CD8-positive, alpha-beta T cell (primary cell): ENCODE measurements at regions of chr13 and their contacts with region 1.

Region 1: DNA sequence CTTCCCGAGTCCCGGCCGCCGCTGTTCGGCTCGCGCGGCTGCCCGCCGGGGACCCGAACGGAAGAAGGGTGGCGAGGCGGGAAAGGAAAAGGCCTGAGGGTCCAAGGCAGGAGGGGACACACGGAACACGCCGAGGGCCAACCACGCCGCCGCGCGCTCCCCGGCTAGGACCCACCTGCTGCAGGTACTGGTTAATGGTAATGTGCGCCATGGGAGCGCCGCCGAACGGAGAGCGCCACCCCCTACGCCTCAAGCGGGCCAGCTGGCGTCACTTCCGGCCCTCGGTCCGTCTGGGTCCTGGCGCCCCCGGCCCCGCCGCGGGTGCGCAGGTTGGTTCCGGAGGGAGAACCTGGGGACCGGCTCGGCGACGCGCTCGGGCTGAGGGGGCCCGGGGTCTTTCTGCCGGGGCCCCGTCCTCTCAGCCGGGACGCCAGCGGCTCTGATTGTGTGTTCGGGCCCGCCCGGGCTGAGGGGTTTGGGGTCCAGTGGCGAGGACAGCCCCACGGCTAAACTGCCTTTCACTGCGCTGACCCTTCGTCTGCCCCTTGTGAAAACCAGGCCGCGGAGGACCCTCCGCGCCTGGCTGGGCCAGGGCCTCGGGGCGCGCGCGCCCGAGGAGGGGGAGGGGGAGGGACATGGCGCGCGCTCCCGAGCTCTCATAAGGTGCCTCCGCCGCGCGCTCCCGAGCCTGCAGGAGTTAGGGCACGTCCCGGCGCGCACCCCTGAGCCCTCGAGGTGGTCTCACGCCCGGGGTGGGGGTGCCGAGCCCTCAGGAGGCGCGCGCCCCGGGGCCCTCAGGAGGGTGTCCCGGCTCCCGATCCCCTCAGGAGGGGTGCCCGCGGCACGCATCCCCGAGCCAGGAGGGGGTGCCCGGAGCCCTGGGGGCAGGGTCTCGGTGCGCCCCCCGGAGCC is at the start of gene PCID2:
- DNase-seq: peak; percentile 87 to 96 (median 91)
- ATAC-seq: peak; percentile 67
- H3K4me3 ChIP-seq: peak within 1 kb of the TSS; percentile 83 to 93
- H3K4me3 Mint-ChIP-seq: peak within 1 kb of the TSS; percentile 93
- H3K27ac ChIP-seq: peak within 1 kb of the TSS; percentile 90 to 95
- H3K27ac Mint-ChIP-seq: peak within 1 kb of the TSS; percentile 95
- H3K4me1 ChIP-seq: peaks cover 52% of the 10 kb centered on the region
- H3K4me1 Mint-ChIP-seq: peaks cover 58% of the 10 kb centered on the region
- H3K27me3 ChIP-seq: no peaks in the 10 kb centered on the region
- H3K27me3 Mint-ChIP-seq: no peaks in the 10 kb centered on the region
- CTCF ChIP-seq: no peak
- total RNA-seq, gene PCID2: 30.5 to 34.1 TPM

Region 2: GRCh38 chr13:112587212-112587763 is 621.4 kb before region 1 on chr13:
- CTCF ChIA-PET with region 1: no interaction called
- POLR2A ChIA-PET with region 1: no interaction called
- intact Hi-C with region 1: loop called in 1 of 2 experiments (anchors 5 kb)
- DNase-seq: peak; percentile 9 to 81 (median 68)
- ATAC-seq: peak; percentile 70
- H3K4me3 ChIP-seq: peak overlapping the region; percentile 76 to 83
- H3K4me3 Mint-ChIP-seq: peak overlapping the region; percentile 96
- H3K27ac ChIP-seq: peak overlapping the region; percentile 57 to 58
- H3K27ac Mint-ChIP-seq: peak overlapping the region; percentile 89
- H3K4me1 ChIP-seq: peaks cover 18% of the 10 kb centered on the region
- H3K4me1 Mint-ChIP-seq: peaks cover 44% of the 10 kb centered on the region
- H3K27me3 ChIP-seq: no peaks in the 10 kb centered on the region
- H3K27me3 Mint-ChIP-seq: no peaks in the 10 kb centered on the region
- CTCF ChIP-seq: no peak

Region 3: DNA sequence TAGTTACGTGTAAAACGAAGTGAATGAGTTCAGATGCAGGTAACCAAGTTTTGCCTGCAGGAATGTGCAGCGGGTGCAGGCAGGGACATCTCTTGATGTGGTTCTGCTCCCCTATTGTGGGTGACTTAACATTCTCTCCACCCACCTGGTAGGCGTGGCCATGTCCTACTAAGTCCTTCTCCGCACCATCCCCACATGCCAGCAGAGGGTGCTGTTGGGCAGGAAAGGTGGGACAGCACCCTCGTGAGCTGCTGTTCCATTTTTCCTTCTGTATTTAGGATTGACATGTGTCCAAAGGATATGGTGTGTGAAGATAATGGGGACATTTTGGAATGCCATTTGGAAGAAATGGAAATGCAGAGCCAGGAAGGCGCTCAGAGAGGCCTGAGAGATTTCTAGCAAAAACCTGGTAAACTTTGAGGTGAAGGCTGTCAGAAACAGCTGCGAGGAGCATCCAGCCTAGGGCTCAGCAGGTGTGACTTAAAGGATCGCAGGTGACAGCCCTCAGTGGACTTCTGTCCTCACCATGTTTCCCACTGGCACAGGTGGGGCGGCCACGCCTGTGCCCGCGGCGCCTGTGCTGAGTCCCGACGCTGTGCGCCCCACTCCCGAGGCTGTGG is 265.9 kb before region 1 on chr13:
- CTCF ChIA-PET with region 1: interaction called, 3 read pairs
- POLR2A ChIA-PET with region 1: no interaction called
- intact Hi-C with region 1: loop called (anchors 1 to 5 kb)
- DNase-seq: peak; percentile 89 to 98 (median 96)
- ATAC-seq: peak; percentile 99
- H3K4me3 ChIP-seq: peak overlapping the region; percentile 45 to 47
- H3K4me3 Mint-ChIP-seq: peak overlapping the region; percentile 89
- H3K27ac ChIP-seq: no peak overlapping the region
- H3K27ac Mint-ChIP-seq: no peak overlapping the region
- H3K4me1 ChIP-seq: peaks cover 9% of the 10 kb centered on the region
- H3K4me1 Mint-ChIP-seq: peaks cover 8% of the 10 kb centered on the region
- H3K27me3 ChIP-seq: peaks cover 0 to 12% of the 10 kb centered on the region in 2 experiments
- H3K27me3 Mint-ChIP-seq: peaks cover 24% of the 10 kb centered on the region
- CTCF ChIP-seq: peak; percentile 98

Region 4: DNA sequence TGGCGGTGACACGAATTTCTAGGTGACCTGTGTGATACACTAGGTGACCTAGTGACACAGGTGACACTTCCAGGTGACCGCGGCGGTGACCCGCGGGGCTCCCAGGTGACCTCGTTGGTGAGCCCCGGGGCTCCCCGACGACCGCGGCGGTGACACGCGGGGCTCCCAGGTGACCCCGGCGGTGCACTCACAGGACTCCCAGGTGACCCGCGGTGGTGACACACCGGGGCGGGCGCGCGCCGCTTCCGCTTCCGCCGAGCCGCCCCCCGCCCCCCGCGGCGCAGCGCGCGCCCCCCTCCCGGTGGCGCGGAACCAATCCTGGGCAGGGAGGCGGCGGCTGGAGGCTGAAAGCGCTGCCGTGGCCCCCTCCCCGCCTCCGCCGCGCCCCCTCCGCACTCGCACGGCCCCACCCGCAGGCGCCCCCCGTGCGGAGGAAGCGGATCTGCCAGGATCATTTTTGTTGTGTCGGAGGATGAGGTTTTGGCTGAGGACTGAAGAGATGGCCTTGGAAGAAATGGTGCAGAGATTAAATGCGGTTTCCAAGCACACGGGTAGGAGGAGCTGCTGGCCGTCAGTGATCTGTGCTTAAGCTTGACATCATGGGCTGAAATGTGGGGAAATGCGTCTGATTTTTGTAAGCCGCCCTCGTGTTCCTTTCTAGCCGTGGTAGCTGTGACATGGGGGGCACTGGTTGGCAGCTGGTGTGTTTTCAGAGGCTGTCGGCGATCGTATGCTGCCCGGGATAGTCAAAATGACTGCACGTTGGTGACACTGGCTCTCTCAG is 239.6 kb before region 1 on chr13 and contains the start of gene MCF2L:
- CTCF ChIA-PET with region 1: no interaction called
- POLR2A ChIA-PET with region 1: interaction called, 6 read pairs
- intact Hi-C with region 1: loop called in 1 of 2 experiments (anchors 2 kb)
- DNase-seq: peak; percentile 31 to 83 (median 69)
- ATAC-seq: peak; percentile 75
- H3K4me3 ChIP-seq: peak within 1 kb of the TSS; percentile 63 to 66
- H3K4me3 Mint-ChIP-seq: peak within 1 kb of the TSS; percentile 96
- H3K27ac ChIP-seq: peak within 1 kb of the TSS; percentile 53 to 69
- H3K27ac Mint-ChIP-seq: peak within 1 kb of the TSS; percentile 95
- H3K4me1 ChIP-seq: peaks cover 23% of the 10 kb centered on the region
- H3K4me1 Mint-ChIP-seq: peaks cover 41% of the 10 kb centered on the region
- H3K27me3 ChIP-seq: no peaks in the 10 kb centered on the region
- H3K27me3 Mint-ChIP-seq: no peaks in the 10 kb centered on the region
- CTCF ChIP-seq: no peak
- total RNA-seq, gene MCF2L: 13.7 to 15.0 TPM

Region 5: DNA sequence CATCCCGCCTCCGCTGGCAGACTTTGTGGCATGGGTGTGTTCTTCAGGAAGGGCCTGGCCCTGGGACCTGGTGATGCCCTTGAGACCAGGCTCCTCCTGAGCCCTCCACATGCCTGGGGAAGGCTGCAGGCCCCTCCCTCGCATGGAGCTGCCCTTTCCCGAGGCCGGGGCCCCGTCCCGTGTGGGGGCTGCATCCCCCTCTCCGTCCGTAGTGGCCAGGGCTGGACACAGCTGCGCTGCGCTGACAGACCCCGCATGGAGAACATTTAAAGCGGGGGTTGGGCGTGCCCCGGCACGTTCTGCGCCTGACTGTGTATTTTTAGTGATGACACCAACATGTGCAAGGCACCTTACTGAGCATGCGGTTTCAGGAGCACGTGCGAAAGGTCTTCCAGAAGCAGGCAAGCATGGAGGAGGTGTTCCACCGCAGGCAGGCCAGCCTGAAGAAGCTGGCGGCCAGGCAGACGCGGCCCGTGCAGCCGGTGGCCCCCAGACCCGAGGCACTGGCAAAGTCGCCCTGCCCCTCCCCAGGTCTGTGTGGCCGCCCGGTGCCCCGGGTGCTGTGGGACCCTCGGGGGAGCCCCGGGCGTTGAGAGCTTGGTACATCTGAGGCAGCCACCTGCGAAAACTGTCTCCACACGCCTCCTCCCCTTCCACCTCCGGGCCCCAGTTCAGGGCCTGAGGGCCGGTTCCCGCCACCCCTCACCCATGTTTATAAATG is 131.8 kb before region 1 on chr13:
- CTCF ChIA-PET with region 1: no interaction called
- POLR2A ChIA-PET with region 1: no interaction called
- intact Hi-C with region 1: no loop called
- DNase-seq: no peak
- ATAC-seq: no peak
- H3K4me3 ChIP-seq: no peak overlapping the region
- H3K4me3 Mint-ChIP-seq: no peak overlapping the region
- H3K27ac ChIP-seq: no peak overlapping the region
- H3K27ac Mint-ChIP-seq: no peak overlapping the region
- H3K4me1 ChIP-seq: no peaks in the 10 kb centered on the region
- H3K4me1 Mint-ChIP-seq: no peaks in the 10 kb centered on the region
- H3K27me3 ChIP-seq: no peaks in the 10 kb centered on the region
- H3K27me3 Mint-ChIP-seq: no peaks in the 10 kb centered on the region
- CTCF ChIP-seq: no peak

Region 6: DNA sequence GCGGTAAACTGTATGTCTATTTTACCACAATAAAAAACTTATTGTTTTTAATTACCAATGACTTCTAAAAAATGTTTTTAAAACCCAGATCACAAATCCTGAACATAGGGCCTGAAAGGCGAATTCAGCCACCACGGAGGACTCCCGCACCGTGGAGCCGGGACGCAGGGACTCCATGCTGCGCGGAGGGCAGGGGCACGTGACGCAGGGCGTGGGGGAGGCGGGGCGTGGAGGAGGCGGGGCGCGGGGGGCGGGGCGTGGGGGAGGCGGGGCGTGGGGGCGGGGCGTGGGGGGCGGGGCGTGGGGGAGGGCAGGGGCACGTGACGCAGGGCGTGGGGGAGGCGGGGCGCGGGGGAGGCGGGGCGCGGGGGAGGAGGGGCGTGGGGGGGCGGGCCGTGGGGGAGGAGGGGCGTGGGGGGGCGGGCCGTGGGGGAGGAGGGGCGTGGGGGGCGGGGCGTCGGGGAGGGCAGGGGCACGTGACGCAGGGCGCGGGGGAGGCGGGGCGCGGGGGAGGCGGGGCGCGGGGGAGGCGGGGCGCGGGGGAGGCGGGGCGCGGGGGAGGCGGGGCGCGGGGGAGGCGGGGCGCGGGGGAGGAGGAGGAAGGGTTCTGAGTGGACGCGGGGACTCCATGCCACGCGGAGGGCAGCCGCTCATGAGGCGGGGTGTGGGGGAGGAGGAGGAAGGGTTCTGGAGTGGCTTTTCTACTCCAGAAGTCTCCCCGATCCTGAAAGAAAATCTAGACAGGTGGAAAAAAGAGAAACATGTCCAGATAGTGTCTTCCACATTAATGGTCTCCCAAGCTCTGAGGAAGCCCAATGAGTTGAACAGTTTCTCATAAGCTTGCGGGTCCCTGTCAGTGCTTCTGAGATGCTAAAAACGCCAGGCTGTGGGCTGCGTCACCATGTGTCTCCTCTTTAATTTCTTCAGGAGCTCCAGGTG is 54.6 kb before region 1 on chr13:
- CTCF ChIA-PET with region 1: no interaction called
- POLR2A ChIA-PET with region 1: interaction called, 24 read pairs
- intact Hi-C with region 1: loop called (anchors 1 kb)
- DNase-seq: peak; percentile 51 to 88 (median 75)
- ATAC-seq: peak; percentile 84
- H3K4me3 ChIP-seq: peak overlapping the region; percentile 52 to 56
- H3K4me3 Mint-ChIP-seq: peak overlapping the region; percentile 83
- H3K27ac ChIP-seq: peak overlapping the region; percentile 19 to 72
- H3K27ac Mint-ChIP-seq: peak overlapping the region; percentile 78
- H3K4me1 ChIP-seq: peaks cover 21% of the 10 kb centered on the region
- H3K4me1 Mint-ChIP-seq: peaks cover 17% of the 10 kb centered on the region
- H3K27me3 ChIP-seq: peaks cover 0 to 6% of the 10 kb centered on the region in 2 experiments
- H3K27me3 Mint-ChIP-seq: peaks cover 4% of the 10 kb centered on the region
- CTCF ChIP-seq: no peak

Region 7: GRCh38 chr13:113186061-113186900 is 22.4 kb before region 1 on chr13:
- CTCF ChIA-PET with region 1: interaction called, 3 read pairs
- POLR2A ChIA-PET with region 1: interaction called, 16 read pairs
- intact Hi-C with region 1: loop called in 1 of 2 experiments (anchors 2 kb)
- DNase-seq: peak in 4 of 9 experiments; percentile 29 to 74 (median 52)
- ATAC-seq: peak; percentile 66
- H3K4me3 ChIP-seq: no peak overlapping the region
- H3K4me3 Mint-ChIP-seq: peak overlapping the region; percentile 54
- H3K27ac ChIP-seq: peak overlapping the region; percentile 13 to 62
- H3K27ac Mint-ChIP-seq: peak overlapping the region; percentile 84
- H3K4me1 ChIP-seq: peaks cover 28% of the 10 kb centered on the region
- H3K4me1 Mint-ChIP-seq: peaks cover 42% of the 10 kb centered on the region
- H3K27me3 ChIP-seq: no peaks in the 10 kb centered on the region
- H3K27me3 Mint-ChIP-seq: no peaks in the 10 kb centered on the region
- CTCF ChIP-seq: no peak

Region 8: GRCh38 chr13:113490496-113491417 is 282.1 kb after region 1 on chr13 and contains the start of gene DCUN1D2:
- CTCF ChIA-PET with region 1: no interaction called
- POLR2A ChIA-PET with region 1: no interaction called
- intact Hi-C with region 1: loop called in 1 of 2 experiments (anchors 2 kb)
- DNase-seq: peak; percentile 46 to 84 (median 70)
- ATAC-seq: peak; percentile 69
- H3K4me3 ChIP-seq: peak within 1 kb of the TSS; percentile 62 to 66
- H3K4me3 Mint-ChIP-seq: peak within 1 kb of the TSS; percentile 91
- H3K27ac ChIP-seq: peak within 1 kb of the TSS in 1 of 2 experiments; percentile 42
- H3K27ac Mint-ChIP-seq: peak within 1 kb of the TSS; percentile 87
- H3K4me1 ChIP-seq: peaks cover 25% of the 10 kb centered on the region
- H3K4me1 Mint-ChIP-seq: peaks cover 64% of the 10 kb centered on the region
- H3K27me3 ChIP-seq: no peaks in the 10 kb centered on the region
- H3K27me3 Mint-ChIP-seq: no peaks in the 10 kb centered on the region
- CTCF ChIP-seq: no peak
- total RNA-seq, gene DCUN1D2: 10.4 to 13.9 TPM